RWPE1 (cell line): ENCODE measurements at regions of chr17 and their contacts with region 1.

Region 1: GRCh38 chr17:49254066-49254465 is 23.5 kb upstream of the PHOSPHO1 start:
- DNase-seq: no peak
- H3K27ac ChIP-seq: no peak overlapping the region
- CTCF ChIP-seq: no peak

Region 2: DNA sequence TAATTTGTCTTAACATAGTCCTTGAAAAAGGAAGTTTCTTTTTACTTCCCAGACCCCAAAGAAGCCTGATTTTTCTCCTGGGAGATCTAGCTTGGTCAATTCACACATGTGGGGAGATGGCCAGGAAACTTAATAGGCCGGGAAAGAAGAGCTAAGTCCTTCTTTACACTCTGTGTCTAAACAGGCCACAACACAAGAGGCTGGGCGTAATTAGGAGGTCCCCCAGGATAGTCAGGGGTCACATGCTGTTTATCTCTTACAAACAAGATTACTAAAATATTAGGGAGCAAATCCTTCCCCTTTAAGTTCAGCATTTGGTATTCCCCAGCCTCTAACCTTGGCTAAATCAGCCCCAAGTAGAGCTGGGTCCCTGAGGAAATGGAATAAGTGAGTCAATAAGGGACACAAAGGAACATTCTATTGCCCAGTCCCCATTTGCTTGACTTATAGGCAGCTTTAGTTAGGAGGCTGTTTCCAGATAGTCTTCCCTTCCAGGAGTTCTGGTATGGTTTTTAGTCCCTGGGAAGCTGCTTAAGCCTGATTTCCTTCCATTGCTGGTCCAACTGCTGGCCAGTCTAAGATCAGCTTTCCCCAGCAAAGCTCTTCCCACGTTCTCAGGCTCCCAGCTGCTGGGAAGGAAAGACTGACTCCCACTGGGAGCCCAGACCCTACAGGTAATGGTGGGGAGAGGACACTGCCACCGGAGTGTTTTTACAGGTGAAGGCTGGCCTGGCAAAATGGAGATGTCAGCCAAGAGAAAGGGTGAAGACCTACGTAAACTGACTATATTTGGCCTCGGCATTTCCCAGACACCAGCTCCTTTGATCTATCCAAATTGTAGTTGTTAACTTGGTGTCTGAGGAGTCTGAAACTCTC is 613.8 kb before region 1 on chr17:
- CTCF ChIA-PET with region 1: interaction called, 11 read pairs
- POLR2A ChIA-PET with region 1: no interaction called
- DNase-seq: no peak
- H3K27ac ChIP-seq: no peak overlapping the region
- CTCF ChIP-seq: no peak

Region 3: GRCh38 chr17:49277638-49278037 is 23.6 kb after region 1 on chr17:
- CTCF ChIA-PET with region 1: no interaction called
- POLR2A ChIA-PET with region 1: no interaction called
- DNase-seq: peak; percentile 54
- H3K27ac ChIP-seq: no peak overlapping the region
- CTCF ChIP-seq: no peak

Region 4: DNA sequence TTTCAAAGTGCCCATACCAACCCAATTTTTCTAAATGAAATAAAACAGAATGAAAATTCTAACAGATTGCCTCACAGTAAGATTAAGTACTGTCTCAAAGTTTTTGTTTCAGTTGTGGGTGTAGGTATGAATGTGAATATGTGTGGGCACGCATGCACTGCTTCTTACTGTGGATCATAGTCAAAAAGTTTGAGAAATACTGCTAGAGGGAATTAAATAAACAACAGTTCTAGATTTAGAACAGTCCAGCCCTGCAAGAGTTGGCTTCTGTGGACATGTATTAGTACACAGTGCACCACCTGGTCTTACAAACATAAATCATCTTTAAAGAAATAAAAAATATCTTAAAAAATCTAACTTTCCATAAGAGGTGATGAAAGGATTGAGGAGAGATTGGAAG is 99.5 kb after region 1 on chr17:
- CTCF ChIA-PET with region 1: no interaction called
- POLR2A ChIA-PET with region 1: no interaction called
- DNase-seq: no peak
- H3K27ac ChIP-seq: no peak overlapping the region
- CTCF ChIP-seq: no peak